ENCODE measurements at regions of chr10 and their contacts with region 1.

Region 1: DNA sequence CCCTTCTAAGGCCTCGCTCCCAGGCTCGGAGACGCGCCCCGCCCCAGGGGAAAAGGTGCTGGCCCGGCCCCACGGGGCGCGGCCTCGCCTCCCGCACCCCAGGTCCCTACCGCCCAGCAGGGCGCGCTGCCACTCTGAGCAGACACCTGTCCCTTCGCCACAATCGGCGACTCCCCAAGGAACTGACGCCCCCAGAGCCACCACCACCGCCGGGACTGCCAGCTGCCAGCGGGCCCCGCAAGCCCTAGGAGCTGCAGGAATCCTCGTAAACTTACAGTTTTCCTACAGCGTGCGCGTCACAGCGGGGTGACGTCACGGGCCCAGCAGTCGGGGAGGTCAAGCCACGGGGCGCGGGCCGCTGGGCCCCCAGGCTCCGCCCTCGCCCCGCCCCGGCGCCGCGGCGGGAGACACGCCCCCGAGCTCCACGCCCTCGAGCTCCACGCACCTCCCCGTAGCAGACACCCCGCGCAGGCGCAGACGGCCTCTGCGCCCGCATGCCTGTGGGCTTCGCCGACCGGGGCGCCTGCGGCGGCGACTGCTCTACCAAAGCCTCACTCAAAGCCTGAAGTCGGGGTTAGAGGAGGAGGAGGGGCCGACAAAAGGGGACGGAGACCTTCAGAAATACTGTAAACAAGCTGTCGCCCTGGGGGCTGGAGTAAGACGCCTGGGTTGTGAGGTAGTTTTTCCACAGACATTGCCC is at the start of gene ZNF438:
- DNase-seq: peak; percentile 97
- H3K4me3 ChIP-seq: peak within 1 kb of the TSS in 2 of 3 experiments; percentile 50 to 66
- H3K27ac ChIP-seq: peak within 1 kb of the TSS; percentile 92
- H3K4me1 ChIP-seq: peaks cover 32% of the 10 kb centered on the region
- H3K27me3 ChIP-seq: no peaks in the 10 kb centered on the region
- CTCF ChIP-seq: peak; percentile 40 to 44
- POLR2A ChIP-seq: peak; percentile 82
- total RNA-seq, gene ZNF438: 11.2 and 15.1 TPM in 2 replicates

Region 2: DNA sequence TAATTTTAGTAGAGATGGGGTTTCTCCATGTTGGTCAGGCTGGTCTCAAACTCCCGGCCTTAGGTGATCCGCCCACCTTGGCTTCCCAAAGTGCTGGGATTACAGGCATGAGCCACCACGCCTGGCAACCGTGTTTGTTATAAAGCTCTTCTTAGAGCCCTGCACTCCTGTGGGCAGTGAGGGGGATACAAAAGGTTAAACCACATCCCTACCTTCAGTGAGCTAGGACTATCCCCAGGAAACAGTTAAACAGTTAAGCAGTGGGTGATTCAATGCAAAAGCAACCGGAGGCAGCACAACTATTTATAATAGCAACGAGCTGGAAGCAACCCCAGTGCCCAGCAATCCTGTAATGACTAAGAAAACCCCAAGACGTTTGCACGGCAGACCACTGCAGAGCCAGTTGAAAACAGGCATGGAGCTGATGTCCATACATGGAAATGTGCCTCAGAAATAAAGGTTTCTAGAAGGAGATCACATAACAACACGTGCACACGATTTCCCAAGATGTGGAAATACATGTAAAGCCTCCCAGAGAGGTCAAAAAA is 294.9 kb before region 1 on chr10:
- CTCF ChIA-PET with region 1: no interaction called
- POLR2A ChIA-PET with region 1: no interaction called
- dilution Hi-C with region 1: no loop called
- intact Hi-C with region 1: loop called (anchors 1 kb)
- DNase-seq: peak; percentile 85
- H3K4me3 ChIP-seq: no peak overlapping the region
- H3K27ac ChIP-seq: peak overlapping the region; percentile 57
- H3K4me1 ChIP-seq: peaks cover 4% of the 10 kb centered on the region
- H3K27me3 ChIP-seq: no peaks in the 10 kb centered on the region
- CTCF ChIP-seq: no peak
- POLR2A ChIP-seq: no peak

Region 3: DNA sequence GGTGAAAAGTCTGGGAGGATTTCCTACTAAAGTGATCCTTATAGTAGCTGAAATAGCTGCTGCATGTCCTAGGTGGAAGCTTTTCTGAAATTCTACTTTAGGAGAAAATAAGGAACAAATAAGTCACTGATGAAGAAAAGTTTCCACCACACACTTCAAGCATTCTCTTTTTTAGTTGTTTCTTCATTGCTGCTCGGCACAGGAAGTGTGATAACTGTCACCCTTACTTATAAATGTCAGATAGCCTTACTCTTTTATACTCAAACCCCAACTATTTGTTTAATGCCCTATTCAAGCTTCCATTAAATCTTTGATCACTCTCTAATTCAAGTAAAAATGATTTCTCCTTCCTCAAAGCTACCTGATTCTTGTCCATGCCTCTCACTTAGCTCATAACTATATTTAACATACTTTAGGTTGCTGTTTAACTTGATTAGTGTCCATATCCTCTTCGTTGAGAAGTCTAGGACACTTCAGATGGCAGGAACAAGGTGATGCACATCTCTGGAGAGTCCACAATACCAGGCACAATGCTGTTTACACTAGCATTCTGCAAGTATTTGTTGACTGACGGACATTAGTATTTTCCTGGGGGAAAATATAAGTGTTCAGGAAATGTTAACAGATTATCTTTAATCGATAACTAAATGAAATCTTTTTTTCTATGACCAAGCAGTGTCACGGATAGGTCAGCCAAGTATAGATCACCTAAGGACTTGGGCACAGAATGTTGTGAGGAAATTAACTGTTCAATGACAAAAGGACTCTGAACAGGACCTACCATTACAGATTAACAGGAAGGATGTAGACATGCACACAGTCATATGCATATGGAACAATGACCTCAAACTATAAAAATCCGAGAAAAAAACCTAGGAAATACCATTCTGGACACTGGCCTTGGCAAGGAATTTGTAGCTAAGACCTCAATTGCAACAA is 67.4 kb before region 1 on chr10:
- CTCF ChIA-PET with region 1: interaction called, 7 read pairs
- POLR2A ChIA-PET with region 1: no interaction called
- dilution Hi-C with region 1: no loop called
- intact Hi-C with region 1: loop called (anchors 1 kb)
- DNase-seq: peak; percentile 81
- H3K4me3 ChIP-seq: peak overlapping the region in 1 of 3 experiments; percentile 30
- H3K27ac ChIP-seq: peak overlapping the region; percentile 99
- H3K4me1 ChIP-seq: peaks cover 45% of the 10 kb centered on the region
- H3K27me3 ChIP-seq: no peaks in the 10 kb centered on the region
- CTCF ChIP-seq: no peak
- POLR2A ChIP-seq: peak; percentile 32

Region 4: GRCh38 chr10:31011017-31011659 is 20.6 kb before region 1 on chr10:
- CTCF ChIA-PET with region 1: interaction called, 4 read pairs
- POLR2A ChIA-PET with region 1: no interaction called
- dilution Hi-C with region 1: no loop called
- intact Hi-C with region 1: loop called (anchors 1 kb)
- DNase-seq: peak; percentile 77
- H3K4me3 ChIP-seq: no peak overlapping the region
- H3K27ac ChIP-seq: peak overlapping the region; percentile 83
- H3K4me1 ChIP-seq: peaks cover 56% of the 10 kb centered on the region
- H3K27me3 ChIP-seq: no peaks in the 10 kb centered on the region
- CTCF ChIP-seq: no peak
- POLR2A ChIP-seq: peak; percentile 60

Region 5: DNA sequence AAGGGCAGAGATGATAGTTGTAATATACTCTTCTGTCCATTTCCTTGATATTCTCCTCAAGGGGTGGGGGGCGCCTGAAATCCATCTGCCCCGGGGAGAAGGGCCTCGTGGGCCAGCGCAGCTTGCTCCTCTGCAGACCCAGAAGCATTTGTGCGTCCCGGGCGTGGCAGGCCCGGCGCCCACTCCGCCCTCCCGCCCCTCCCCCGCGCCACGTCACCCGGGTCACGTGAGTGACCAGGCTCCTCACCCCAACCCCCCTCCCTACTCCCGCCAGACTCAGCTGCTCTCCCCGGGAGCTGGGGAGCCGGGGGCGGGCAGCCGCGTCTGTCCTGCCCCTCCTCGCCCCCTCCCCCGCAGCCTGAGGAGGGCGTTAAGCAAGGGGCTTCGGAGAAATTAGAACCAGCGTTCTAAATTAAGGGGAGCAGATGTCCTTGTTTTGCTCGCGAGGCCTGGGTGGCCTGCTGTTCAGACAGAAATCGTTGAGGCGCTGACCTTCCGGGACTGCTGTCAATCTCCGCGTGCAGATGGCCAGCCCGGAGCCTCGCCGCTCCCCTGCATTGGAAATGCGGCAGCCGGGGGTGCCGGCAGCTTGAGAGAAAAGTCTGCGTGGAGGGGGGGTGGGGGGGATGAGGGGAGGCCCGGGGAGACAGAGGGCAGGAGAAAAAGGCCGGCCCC is 102.1 kb after region 1 on chr10:
- CTCF ChIA-PET with region 1: interaction called, 9 read pairs
- POLR2A ChIA-PET with region 1: interaction called, 5 read pairs
- dilution Hi-C with region 1: no loop called
- intact Hi-C with region 1: loop called (anchors 2 kb)
- DNase-seq: peak; percentile 58
- H3K4me3 ChIP-seq: peak overlapping the region in 2 of 3 experiments; percentile 3 to 19
- H3K27ac ChIP-seq: peak overlapping the region; percentile 96
- H3K4me1 ChIP-seq: peaks cover 21% of the 10 kb centered on the region
- H3K27me3 ChIP-seq: no peaks in the 10 kb centered on the region
- CTCF ChIP-seq: no peak
- POLR2A ChIP-seq: no peak

Region 6: DNA sequence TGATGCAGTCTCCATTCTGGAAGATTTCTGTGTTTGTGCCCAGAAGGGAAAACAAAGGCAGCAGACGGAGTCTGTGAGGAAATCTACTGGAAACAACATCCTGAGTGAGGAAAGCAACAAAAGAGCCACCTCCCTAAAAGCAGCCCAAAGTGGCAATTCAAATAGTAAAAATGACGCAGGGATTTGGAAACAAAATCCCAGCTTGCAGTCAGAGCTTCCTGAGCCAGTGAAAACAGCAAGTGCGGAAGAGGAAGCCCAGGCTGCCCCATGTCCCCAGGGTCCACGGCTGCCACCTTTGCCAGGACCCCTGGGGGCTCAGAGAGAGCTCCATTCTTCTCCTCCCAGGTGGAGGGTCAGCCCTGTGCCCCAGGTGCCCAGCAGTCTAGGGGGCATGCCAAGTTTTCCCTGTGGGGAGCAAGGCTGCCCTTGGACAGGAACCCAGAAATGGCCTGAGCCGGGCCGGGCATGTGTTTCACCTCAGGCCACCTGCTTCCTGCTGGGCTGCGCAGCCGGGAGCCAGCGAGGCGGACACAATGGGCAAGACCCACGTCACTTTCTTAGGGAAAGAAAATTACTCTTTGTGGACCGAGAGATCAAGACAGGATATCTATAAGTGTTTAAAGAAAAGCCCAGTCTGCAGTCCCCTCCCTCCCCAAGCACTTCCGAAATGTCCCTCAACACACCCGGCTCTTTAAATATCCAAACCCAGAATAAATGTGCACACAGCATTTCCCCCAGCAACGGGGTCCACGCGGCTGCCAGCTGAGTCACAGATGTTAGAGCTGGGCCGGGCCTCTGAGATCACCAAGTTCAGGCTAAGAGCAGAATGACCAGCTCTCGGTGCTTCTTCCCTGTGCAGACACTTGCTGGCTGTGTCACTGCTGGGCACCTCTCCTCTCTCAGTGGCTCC is 665.8 kb after region 1 on chr10:
- CTCF ChIA-PET with region 1: no interaction called
- POLR2A ChIA-PET with region 1: interaction called, 5 read pairs
- dilution Hi-C with region 1: no loop called
- intact Hi-C with region 1: loop called (anchors 1 kb)
- DNase-seq: peak; percentile 98
- H3K4me3 ChIP-seq: peak overlapping the region in 1 of 3 experiments; percentile 24
- H3K27ac ChIP-seq: peak overlapping the region; percentile 90
- H3K4me1 ChIP-seq: peaks cover 57% of the 10 kb centered on the region
- H3K27me3 ChIP-seq: no peaks in the 10 kb centered on the region
- CTCF ChIP-seq: no peak
- POLR2A ChIP-seq: peak; percentile 75

Measured in endothelial cell of umbilical vein (primary cell).